Common myeloid progenitor, CD34-positive (primary cell): ENCODE measurements at regions of chr7 and their contacts with region 1.

Region 1: GRCh38 chr7:99990460-99990852 is 14.6 kb upstream of the AZGP1 start:
- DNase-seq: no peak
- H3K4me3 ChIP-seq: peak overlapping the region in 1 of 7 experiments; percentile 11
- H3K27ac ChIP-seq: no peak overlapping the region
- H3K4me1 ChIP-seq: peaks cover 0 to 14% (median 3%) of the 10 kb centered on the region in 4 experiments
- H3K27me3 ChIP-seq: peaks cover 0 to 2% (median 0%) of the 10 kb centered on the region in 5 experiments

Region 2: GRCh38 chr7:99860281-99861127 is 130.0 kb before region 1 on chr7:
- CTCF ChIA-PET with region 1: no interaction called
- POLR2A ChIA-PET with region 1: no interaction called
- DNase-seq: no peak
- H3K4me3 ChIP-seq: no peak overlapping the region
- H3K27ac ChIP-seq: no peak overlapping the region
- H3K4me1 ChIP-seq: no peaks in the 10 kb centered on the region
- H3K27me3 ChIP-seq: peaks cover 0 to 4% (median 0%) of the 10 kb centered on the region in 5 experiments

Region 3: GRCh38 chr7:99975782-99976521 is 14.5 kb before region 1 on chr7 and contains the start of gene AZGP1:
- CTCF ChIA-PET with region 1: interaction called, 93 read pairs
- POLR2A ChIA-PET with region 1: no interaction called
- DNase-seq: peak in 1 of 3 donors; percentile 16
- H3K4me3 ChIP-seq: no peak within 1 kb of the TSS
- H3K27ac ChIP-seq: no peak within 1 kb of the TSS
- H3K4me1 ChIP-seq: no peaks in the 10 kb centered on the region
- H3K27me3 ChIP-seq: peaks cover 0 to 5% (median 0%) of the 10 kb centered on the region in 5 experiments